ENCODE measurements at regions of chr14 and their contacts with region 1.

Region 1: DNA sequence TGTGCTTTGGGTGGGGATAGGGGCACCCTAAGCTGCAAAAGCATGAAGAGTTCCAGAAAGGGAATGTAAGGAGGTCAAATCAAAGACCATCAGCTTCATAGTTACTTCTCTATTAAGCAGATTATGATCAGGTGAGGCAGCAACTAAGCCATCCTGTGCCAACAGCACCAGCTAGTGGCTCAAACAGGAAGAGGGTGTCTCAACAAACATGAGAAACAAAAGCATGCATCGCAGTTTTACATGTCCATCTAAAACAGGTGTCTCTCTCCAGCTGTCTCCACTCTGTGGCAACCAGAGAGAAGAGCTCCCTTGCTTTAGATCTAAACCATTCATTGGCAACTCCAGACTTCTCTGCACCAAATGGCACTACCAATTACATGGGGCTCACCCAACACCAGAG is 52.9 kb downstream of the ACTN1 start:
- DNase-seq: no peak
- H3K4me3 ChIP-seq: no peak overlapping the region
- H3K4me3 Mint-ChIP-seq: no peak overlapping the region
- H3K27ac ChIP-seq: peak overlapping the region in 1 of 2 donors; percentile 95
- H3K27ac Mint-ChIP-seq: peak overlapping the region in 6 of 7 donors; percentile 57 to 97 (median 86)
- H3K4me1 ChIP-seq: peaks cover 66 to 83% of the 10 kb centered on the region in 2 donors
- H3K4me1 Mint-ChIP-seq: peaks cover 87% of the 10 kb centered on the region
- H3K27me3 ChIP-seq: no peaks in the 10 kb centered on the region
- H3K27me3 Mint-ChIP-seq: no peaks in the 10 kb centered on the region
- CTCF ChIP-seq: peak; percentile 68

Region 2: DNA sequence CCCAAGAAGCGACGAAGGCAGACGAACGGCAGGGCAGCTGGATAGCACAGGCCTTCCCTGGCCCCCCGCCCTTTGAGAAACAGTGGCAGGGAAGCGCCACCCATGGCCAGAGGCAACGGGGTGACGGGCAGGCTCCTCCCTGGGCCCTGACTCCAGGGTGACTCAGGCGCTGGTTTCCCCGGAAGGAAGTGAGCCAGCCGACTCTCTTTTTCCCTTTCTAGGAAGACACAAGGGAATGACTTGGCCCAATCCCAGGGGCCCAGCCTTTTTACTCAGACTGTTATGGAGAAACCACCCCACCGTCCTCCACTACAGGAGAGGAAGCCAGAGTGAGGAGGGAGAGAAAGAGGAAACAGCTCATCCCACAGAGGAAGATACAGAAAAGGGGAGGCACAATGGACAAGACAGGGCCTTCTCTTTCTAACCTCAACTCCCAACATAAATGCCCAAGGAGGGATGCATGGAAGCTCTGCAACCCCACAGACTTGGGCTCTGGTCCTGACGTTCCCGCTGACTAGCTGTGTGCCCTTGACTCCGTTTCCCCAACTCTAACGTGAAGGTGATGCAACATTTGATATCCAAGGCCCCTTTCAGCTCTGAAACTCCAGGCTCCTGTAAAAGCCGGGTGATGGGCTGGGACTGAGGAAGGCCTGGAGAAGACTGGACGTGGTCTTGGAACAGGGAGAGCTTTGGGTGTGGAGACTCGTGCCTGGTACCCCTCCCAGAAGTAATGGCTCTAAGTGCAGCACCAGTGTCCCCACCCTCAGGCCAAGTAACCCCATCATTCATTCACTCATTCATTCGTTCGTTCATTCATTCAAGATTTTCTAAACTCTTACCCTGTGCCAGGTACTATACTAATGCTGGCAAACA is 25.0 kb after region 1 on chr14:
- intact Hi-C with region 1: loop called in 1 of 2 experiments (anchors 1 kb)
- DNase-seq: peak; percentile 93 to 98 (median 98)
- H3K4me3 ChIP-seq: peak overlapping the region in 1 of 3 experiments; percentile 41
- H3K4me3 Mint-ChIP-seq: peak overlapping the region; percentile 37 to 46
- H3K27ac ChIP-seq: peak overlapping the region; percentile 84 to 92
- H3K27ac Mint-ChIP-seq: peak overlapping the region; percentile 89 to 98 (median 95)
- H3K4me1 ChIP-seq: peaks cover 64 to 66% of the 10 kb centered on the region in 2 donors
- H3K4me1 Mint-ChIP-seq: peaks cover 78% of the 10 kb centered on the region
- H3K27me3 ChIP-seq: no peaks in the 10 kb centered on the region
- H3K27me3 Mint-ChIP-seq: no peaks in the 10 kb centered on the region
- CTCF ChIP-seq: no peak

Region 3: DNA sequence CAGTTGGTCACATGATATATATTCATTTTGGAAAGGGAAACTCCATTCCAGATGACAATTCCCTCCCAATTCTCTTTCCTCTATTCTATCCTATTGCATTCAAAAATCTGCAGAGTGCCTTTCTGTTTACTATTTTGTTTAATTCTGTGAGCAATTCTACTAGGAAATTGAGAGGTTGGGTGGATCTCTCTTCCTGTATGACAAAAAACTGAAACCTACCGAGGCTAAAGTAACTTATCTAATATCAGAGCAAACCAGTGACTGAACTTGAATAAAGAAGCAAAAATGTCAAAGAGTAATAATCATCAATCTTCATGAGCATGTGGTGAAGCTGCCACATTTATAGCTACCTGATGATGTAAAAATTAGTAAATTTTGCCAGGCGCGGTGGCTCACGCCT is 69.5 kb after region 1 on chr14:
- intact Hi-C with region 1: no loop called
- DNase-seq: no peak
- H3K4me3 ChIP-seq: no peak overlapping the region
- H3K4me3 Mint-ChIP-seq: no peak overlapping the region
- H3K27ac ChIP-seq: no peak overlapping the region
- H3K27ac Mint-ChIP-seq: no peak overlapping the region
- H3K4me1 ChIP-seq: no peaks in the 10 kb centered on the region
- H3K4me1 Mint-ChIP-seq: peaks cover 6% of the 10 kb centered on the region
- H3K27me3 ChIP-seq: no peaks in the 10 kb centered on the region
- H3K27me3 Mint-ChIP-seq: peaks cover 0 to 2% (median 0%) of the 10 kb centered on the region in 3 donors
- CTCF ChIP-seq: no peak

Region 4: GRCh38 chr14:69043596-69044260 is 117.5 kb after region 1 on chr14:
- intact Hi-C with region 1: loop called in 1 of 2 experiments (anchors 5 kb)
- DNase-seq: peak; percentile 75 to 87 (median 86)
- H3K4me3 ChIP-seq: peak overlapping the region in 2 of 3 experiments; percentile 8 to 57
- H3K4me3 Mint-ChIP-seq: peak overlapping the region; percentile 55 to 80
- H3K27ac ChIP-seq: peak overlapping the region; percentile 83 to 98
- H3K27ac Mint-ChIP-seq: peak overlapping the region; percentile 94 to 98 (median 97)
- H3K4me1 ChIP-seq: peaks cover 79 to 81% of the 10 kb centered on the region in 2 donors
- H3K4me1 Mint-ChIP-seq: peaks cover 87% of the 10 kb centered on the region
- H3K27me3 ChIP-seq: no peaks in the 10 kb centered on the region
- H3K27me3 Mint-ChIP-seq: peaks cover 0 to 3% (median 2%) of the 10 kb centered on the region in 3 donors
- CTCF ChIP-seq: no peak